H1 (cell line): ENCODE measurements at regions of chr6 and their contacts with region 1.

Region 1: GRCh38 chr6:113858480-113859348 is 1.6 kb downstream of the MARCKS start:
- DNase-seq: peak; percentile 89 to 96
- H3K4me3 ChIP-seq: peak overlapping the region; percentile 95 to 99 (median 98)
- H3K27ac ChIP-seq: peak overlapping the region; percentile 90
- H3K4me1 ChIP-seq: peaks cover 4 to 7% (median 6%) of the 10 kb centered on the region in 4 experiments; a peak in 4 of 7 replicates
- H3K27me3 ChIP-seq: peaks cover 6 to 21% (median 15%) of the 10 kb centered on the region in 4 experiments; a peak in 6 of 7 replicates
- CTCF ChIP-seq: peak; percentile 79 to 91 (median 82)
- EP300 ChIP-seq: peak in 1 of 2 experiments; percentile 69; a peak in 2 of 3 replicates
- POLR2A ChIP-seq: peak; percentile 88 to 91
- RAD21 ChIP-seq: peak; percentile 84 to 96

Region 2: GRCh38 chr6:113488812-113489685 is 369.7 kb before region 1 on chr6:
- CTCF ChIA-PET with region 1: interaction called, 13 read pairs
- POLR2A ChIA-PET with region 1: interaction called, 5 read pairs
- DNase-seq: no peak
- H3K4me3 ChIP-seq: no peak overlapping the region
- H3K27ac ChIP-seq: no peak overlapping the region
- H3K4me1 ChIP-seq: no peaks in the 10 kb centered on the region
- H3K27me3 ChIP-seq: no peaks in the 10 kb centered on the region
- CTCF ChIP-seq: peak in 2 of 3 experiments; percentile 69 to 84; a peak in 3 of 4 replicates
- EP300 ChIP-seq: no peak
- POLR2A ChIP-seq: no peak
- RAD21 ChIP-seq: peak; percentile 87

Region 3: DNA sequence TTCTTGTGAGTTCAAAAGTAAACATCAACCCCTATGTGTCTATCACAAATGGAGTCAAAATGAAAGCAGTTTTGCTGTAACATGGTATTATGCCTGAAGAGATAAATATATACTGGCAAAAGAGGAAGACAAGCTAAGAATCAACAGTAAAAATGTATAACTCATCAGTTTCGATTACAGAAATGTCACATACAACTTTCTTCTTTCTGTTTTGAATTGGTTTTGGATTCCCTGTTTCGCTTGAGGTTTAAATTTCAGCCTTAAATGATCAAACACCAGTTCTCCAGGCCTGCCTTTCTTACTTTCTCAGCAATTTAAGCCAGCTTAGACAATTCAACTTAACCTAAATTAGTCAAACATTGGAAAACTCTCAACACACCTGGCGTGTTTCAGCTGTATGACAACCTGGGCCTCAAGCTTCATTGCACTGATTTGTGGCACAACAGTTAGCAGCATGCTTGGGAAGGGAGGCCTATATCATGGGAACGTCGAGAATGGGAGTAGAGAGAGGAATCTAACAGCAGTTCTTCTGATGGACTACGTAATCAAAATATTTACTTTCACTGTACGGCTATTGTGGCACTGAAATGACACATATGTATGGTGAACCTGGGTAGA is 53.4 kb before region 1 on chr6:
- CTCF ChIA-PET with region 1: no interaction called
- POLR2A ChIA-PET with region 1: no interaction called
- DNase-seq: no peak
- H3K4me3 ChIP-seq: no peak overlapping the region
- H3K27ac ChIP-seq: no peak overlapping the region
- H3K4me1 ChIP-seq: no peaks in the 10 kb centered on the region
- H3K27me3 ChIP-seq: no peaks in the 10 kb centered on the region; a peak in 1 of 7 replicates
- CTCF ChIP-seq: no peak
- EP300 ChIP-seq: no peak
- POLR2A ChIP-seq: no peak
- RAD21 ChIP-seq: no peak

Region 4: GRCh38 chr6:113847447-113847846 is 11.3 kb before region 1 on chr6:
- CTCF ChIA-PET with region 1: interaction called, 5 read pairs
- POLR2A ChIA-PET with region 1: interaction called, 21 read pairs
- DNase-seq: no peak
- H3K4me3 ChIP-seq: no peak overlapping the region
- H3K27ac ChIP-seq: no peak overlapping the region
- H3K4me1 ChIP-seq: no peaks in the 10 kb centered on the region
- H3K27me3 ChIP-seq: no peaks in the 10 kb centered on the region; a peak in 3 of 7 replicates
- CTCF ChIP-seq: no peak
- EP300 ChIP-seq: no peak
- POLR2A ChIP-seq: no peak
- RAD21 ChIP-seq: no peak

Region 5: GRCh38 chr6:113901482-113901881 is 42.8 kb after region 1 on chr6:
- CTCF ChIA-PET with region 1: no interaction called
- POLR2A ChIA-PET with region 1: no interaction called
- DNase-seq: no peak
- H3K4me3 ChIP-seq: no peak overlapping the region
- H3K27ac ChIP-seq: no peak overlapping the region
- H3K4me1 ChIP-seq: no peaks in the 10 kb centered on the region
- H3K27me3 ChIP-seq: no peaks in the 10 kb centered on the region
- CTCF ChIP-seq: no peak
- EP300 ChIP-seq: no peak
- POLR2A ChIP-seq: no peak
- RAD21 ChIP-seq: no peak